Ovary (tissue), 10 donors: ENCODE measurements at regions of chr5 and their contacts with region 1.

Region 1: GRCh38 chr5:153081385-153081784 is 409.1 kb upstream of the GRIA1 start:
- DNase-seq: no peak
- H3K4me3 ChIP-seq: no peak overlapping the region
- H3K27ac ChIP-seq: no peak overlapping the region
- H3K4me1 ChIP-seq: no peaks in the 10 kb centered on the region
- H3K27me3 ChIP-seq: no peaks in the 10 kb centered on the region
- CTCF ChIP-seq: no peak
- EP300 ChIP-seq: no peak
- POLR2A ChIP-seq: no peak

Region 2: GRCh38 chr5:153043886-153044285 is 37.5 kb before region 1 on chr5:
- intact Hi-C with region 1: loop called in 1 of 4 experiments (anchors 2 kb)
- DNase-seq: no peak
- H3K4me3 ChIP-seq: no peak overlapping the region
- H3K27ac ChIP-seq: no peak overlapping the region
- H3K4me1 ChIP-seq: no peaks in the 10 kb centered on the region
- H3K27me3 ChIP-seq: no peaks in the 10 kb centered on the region
- CTCF ChIP-seq: no peak
- EP300 ChIP-seq: no peak
- POLR2A ChIP-seq: no peak